ENCODE measurements at regions of chr12 and their contacts with region 1.

Region 1: GRCh38 chr12:53476769-53477209 is 22.5 kb downstream of the MAP3K12 start:
- DNase-seq: peak in 1 of 5 donors; percentile 15
- H3K4me3 ChIP-seq: no peak overlapping the region
- H3K4me3 Mint-ChIP-seq: no peak overlapping the region
- H3K27ac ChIP-seq: no peak overlapping the region
- H3K27ac Mint-ChIP-seq: peak overlapping the region in 6 of 7 donors; percentile 2 to 82 (median 32)
- H3K4me1 ChIP-seq: peaks cover 50% of the 10 kb centered on the region
- H3K4me1 Mint-ChIP-seq: peaks cover 31 to 50% (median 33%) of the 10 kb centered on the region in 4 donors
- H3K27me3 ChIP-seq: no peaks in the 10 kb centered on the region
- H3K27me3 Mint-ChIP-seq: no peaks in the 10 kb centered on the region

Region 2: GRCh38 chr12:53424626-53425514 is 51.9 kb before region 1 on chr12:
- CTCF ChIA-PET with region 1: interaction called, 10 read pairs
- POLR2A ChIA-PET with region 1: no interaction called
- intact Hi-C with region 1: no loop called
- DNase-seq: no peak
- H3K4me3 ChIP-seq: no peak overlapping the region
- H3K4me3 Mint-ChIP-seq: no peak overlapping the region
- H3K27ac ChIP-seq: no peak overlapping the region
- H3K27ac Mint-ChIP-seq: no peak overlapping the region
- H3K4me1 ChIP-seq: peaks cover 5% of the 10 kb centered on the region
- H3K4me1 Mint-ChIP-seq: peaks cover 5 to 9% (median 6%) of the 10 kb centered on the region in 4 donors
- H3K27me3 ChIP-seq: no peaks in the 10 kb centered on the region
- H3K27me3 Mint-ChIP-seq: no peaks in the 10 kb centered on the region

Region 3: DNA sequence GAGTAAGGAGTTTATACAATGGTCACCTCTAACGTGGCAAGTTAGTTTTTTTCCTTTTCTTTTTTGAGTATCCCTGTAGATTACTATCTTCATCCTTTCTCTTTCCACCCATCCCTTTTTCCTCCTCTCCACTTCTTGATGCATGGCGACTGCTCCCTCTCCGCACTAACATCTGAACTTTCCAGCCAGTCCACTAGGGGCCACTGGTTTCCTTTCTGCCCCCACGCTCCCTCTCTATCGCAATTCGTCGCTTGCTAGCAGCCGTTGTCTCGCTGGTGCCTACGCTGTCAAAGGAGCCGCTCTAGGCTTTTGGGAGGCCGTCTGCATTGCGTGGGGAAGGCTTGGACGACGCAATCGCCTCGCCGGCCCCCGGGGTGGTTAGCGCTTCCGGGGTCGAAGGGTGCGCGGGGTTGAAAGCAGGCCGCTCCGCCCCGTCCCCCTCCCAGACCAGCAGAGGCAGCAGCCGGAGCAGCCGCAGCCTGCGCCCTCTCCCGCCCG is 25.1 kb before region 1 on chr12 and contains the start of gene PCBP2:
- CTCF ChIA-PET with region 1: interaction called, 6 read pairs
- POLR2A ChIA-PET with region 1: interaction called, 13 read pairs
- intact Hi-C with region 1: no loop called
- DNase-seq: peak; percentile 97 to 99 (median 98)
- H3K4me3 ChIP-seq: peak within 1 kb of the TSS; percentile 58 to 61
- H3K4me3 Mint-ChIP-seq: peak within 1 kb of the TSS; percentile 95 to 100 (median 98)
- H3K27ac ChIP-seq: peak within 1 kb of the TSS; percentile 95
- H3K27ac Mint-ChIP-seq: peak within 1 kb of the TSS; percentile 98 to 100 (median 99)
- H3K4me1 ChIP-seq: peaks cover 34% of the 10 kb centered on the region
- H3K4me1 Mint-ChIP-seq: peaks cover 20 to 49% (median 31%) of the 10 kb centered on the region in 4 donors
- H3K27me3 ChIP-seq: no peaks in the 10 kb centered on the region
- H3K27me3 Mint-ChIP-seq: no peaks in the 10 kb centered on the region
- total RNA-seq, gene PCBP2: 848 to 858 TPM

Region 4: GRCh38 chr12:53459097-53459496 is 17.7 kb before region 1 on chr12:
- CTCF ChIA-PET with region 1: interaction called, 6 read pairs
- POLR2A ChIA-PET with region 1: interaction called, 13 read pairs
- intact Hi-C with region 1: loop called (anchors 2 kb)
- DNase-seq: no peak
- H3K4me3 ChIP-seq: no peak overlapping the region
- H3K4me3 Mint-ChIP-seq: peak overlapping the region in 1 of 8 donors; percentile 12
- H3K27ac ChIP-seq: no peak overlapping the region
- H3K27ac Mint-ChIP-seq: peak overlapping the region in 1 of 7 donors; percentile 41
- H3K4me1 ChIP-seq: peaks cover 16% of the 10 kb centered on the region
- H3K4me1 Mint-ChIP-seq: peaks cover 20 to 51% (median 33%) of the 10 kb centered on the region in 4 donors
- H3K27me3 ChIP-seq: no peaks in the 10 kb centered on the region
- H3K27me3 Mint-ChIP-seq: no peaks in the 10 kb centered on the region

Region 5: GRCh38 chr12:53492830-53493611 is 16.2 kb after region 1 on chr12:
- CTCF ChIA-PET with region 1: interaction called, 11 read pairs
- POLR2A ChIA-PET with region 1: interaction called, 67 read pairs
- intact Hi-C with region 1: no loop called
- DNase-seq: peak; percentile 82 to 91 (median 83)
- H3K4me3 ChIP-seq: peak overlapping the region; percentile 45 to 93
- H3K4me3 Mint-ChIP-seq: peak overlapping the region; percentile 88 to 98 (median 90)
- H3K27ac ChIP-seq: peak overlapping the region; percentile 75
- H3K27ac Mint-ChIP-seq: peak overlapping the region; percentile 86 to 99 (median 96)
- H3K4me1 ChIP-seq: peaks cover 26% of the 10 kb centered on the region
- H3K4me1 Mint-ChIP-seq: peaks cover 15 to 56% (median 39%) of the 10 kb centered on the region in 4 donors
- H3K27me3 ChIP-seq: no peaks in the 10 kb centered on the region
- H3K27me3 Mint-ChIP-seq: no peaks in the 10 kb centered on the region

Measured in CD4-positive, alpha-beta memory T cell (primary cell).